Activated CD8-positive, alpha-beta T cell treated with anti-CD3 and anti-CD28 coated beads, Interleukin-2, amount 10 ng/mL, durations not matched to agents 7 days and 5 days (primary cell): ENCODE measurements at regions of chr11 and their contacts with region 1.

Region 1: DNA sequence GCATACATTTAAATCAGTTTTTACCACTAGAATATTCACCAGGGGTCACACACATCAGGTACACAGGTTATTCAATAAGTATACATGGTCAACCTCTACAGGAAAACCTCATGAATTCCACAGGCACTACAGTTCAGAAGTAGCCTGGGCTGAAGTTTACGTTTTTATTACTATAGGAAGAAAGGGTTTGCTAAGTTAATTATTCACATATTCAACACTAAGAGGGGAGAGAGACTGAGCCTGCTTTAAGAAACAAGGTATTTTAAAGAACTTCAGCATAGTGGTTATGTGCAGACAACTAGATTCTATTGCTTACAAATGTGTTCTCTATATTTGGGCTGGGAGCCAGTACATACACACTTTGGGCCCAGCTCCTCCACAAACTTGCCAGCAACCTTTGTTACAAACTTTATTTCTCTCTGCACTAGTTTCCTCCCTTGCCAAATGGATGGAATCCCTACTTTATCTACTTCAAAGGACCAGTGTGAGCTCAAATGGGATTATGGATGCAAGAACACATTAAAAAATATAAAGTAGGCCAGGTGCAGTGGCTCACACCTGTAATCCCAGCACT is 31.9 kb downstream of the IL18BP start:
- DNase-seq: no peak
- ATAC-seq: no peak
- H3K4me3 Mint-ChIP-seq: no peak overlapping the region
- H3K27ac Mint-ChIP-seq: no peak overlapping the region
- H3K4me1 Mint-ChIP-seq: peaks cover 19% of the 10 kb centered on the region
- H3K27me3 Mint-ChIP-seq: no peaks in the 10 kb centered on the region

Region 2: DNA sequence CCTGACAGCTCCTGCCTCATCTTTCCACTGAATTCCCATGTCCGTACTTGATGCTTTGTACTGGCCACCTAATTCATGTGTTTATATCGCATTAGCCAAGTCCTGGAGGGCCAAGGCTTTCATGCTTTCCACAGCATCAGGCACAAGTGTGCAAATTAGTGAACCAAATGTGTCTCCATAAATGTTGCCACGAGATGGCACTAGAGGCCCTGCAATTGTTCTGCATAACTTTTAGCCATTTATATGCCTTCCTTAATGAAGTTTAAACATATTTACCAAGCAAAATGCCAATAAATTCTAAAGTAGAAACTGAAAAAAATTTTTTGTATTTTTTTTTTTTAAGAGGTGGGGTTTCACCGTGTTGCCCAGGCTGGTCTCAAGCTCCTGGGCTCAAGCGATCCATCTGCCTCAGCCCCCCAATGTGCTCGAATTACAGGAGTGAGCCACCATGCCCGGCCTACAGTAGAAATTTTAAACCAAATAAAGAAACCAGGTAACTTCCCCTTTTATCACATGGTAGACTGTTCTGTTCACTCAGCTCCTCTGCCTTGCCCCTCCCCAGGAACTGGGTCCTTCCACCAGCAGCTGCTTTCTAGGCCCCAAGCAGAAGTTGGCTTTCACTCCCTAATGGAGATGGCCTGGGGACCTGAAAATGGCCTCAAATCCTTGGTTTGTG is 52.7 kb before region 1 on chr11:
- CTCF ChIA-PET with region 1: interaction called, 19 read pairs
- POLR2A ChIA-PET with region 1: no interaction called
- DNase-seq: peak; percentile 74
- ATAC-seq: peak; percentile 70
- H3K4me3 Mint-ChIP-seq: no peak overlapping the region
- H3K27ac Mint-ChIP-seq: no peak overlapping the region
- H3K4me1 Mint-ChIP-seq: no peaks in the 10 kb centered on the region
- H3K27me3 Mint-ChIP-seq: no peaks in the 10 kb centered on the region

Region 3: DNA sequence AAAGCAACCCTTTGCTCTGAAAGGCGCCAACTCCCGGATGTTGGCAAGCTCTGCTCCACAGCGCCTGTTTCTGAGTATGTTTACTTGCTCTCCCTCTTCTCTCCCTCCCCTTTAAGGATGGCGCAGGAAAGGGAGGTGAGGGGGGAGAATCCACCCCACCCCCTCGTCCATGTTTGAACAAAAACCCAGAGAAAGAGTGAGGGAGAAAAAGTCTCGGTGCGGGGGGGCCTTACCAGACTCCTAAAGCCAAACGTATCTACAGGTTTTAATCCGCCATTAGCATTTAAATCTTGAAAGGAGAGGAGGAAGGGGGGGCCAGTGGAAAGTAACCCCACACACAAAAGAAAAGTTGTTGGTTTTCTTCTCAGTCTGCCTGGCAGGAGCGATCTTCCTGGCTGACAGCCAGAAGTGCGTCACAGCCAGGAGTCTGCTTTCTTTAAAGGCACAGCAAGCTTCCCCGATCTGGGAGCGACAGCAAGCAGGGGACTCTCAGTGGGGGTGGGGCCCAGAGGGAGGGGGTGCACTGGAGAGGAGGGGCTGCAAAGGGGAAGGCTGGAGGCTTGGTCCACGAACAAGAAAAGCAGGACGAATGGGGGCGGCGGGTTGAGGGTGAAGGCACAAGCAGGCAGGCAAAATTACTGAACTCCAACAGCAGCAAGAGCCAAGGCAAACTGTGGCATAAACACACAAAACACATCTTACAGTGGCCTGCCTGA is 10.3 kb after region 1 on chr11:
- CTCF ChIA-PET with region 1: interaction called, 58 read pairs
- POLR2A ChIA-PET with region 1: interaction called, 10 read pairs
- DNase-seq: peak; percentile 73
- ATAC-seq: peak; percentile 30
- H3K4me3 Mint-ChIP-seq: no peak overlapping the region
- H3K27ac Mint-ChIP-seq: no peak overlapping the region
- H3K4me1 Mint-ChIP-seq: peaks cover 7% of the 10 kb centered on the region
- H3K27me3 Mint-ChIP-seq: no peaks in the 10 kb centered on the region

Region 4: DNA sequence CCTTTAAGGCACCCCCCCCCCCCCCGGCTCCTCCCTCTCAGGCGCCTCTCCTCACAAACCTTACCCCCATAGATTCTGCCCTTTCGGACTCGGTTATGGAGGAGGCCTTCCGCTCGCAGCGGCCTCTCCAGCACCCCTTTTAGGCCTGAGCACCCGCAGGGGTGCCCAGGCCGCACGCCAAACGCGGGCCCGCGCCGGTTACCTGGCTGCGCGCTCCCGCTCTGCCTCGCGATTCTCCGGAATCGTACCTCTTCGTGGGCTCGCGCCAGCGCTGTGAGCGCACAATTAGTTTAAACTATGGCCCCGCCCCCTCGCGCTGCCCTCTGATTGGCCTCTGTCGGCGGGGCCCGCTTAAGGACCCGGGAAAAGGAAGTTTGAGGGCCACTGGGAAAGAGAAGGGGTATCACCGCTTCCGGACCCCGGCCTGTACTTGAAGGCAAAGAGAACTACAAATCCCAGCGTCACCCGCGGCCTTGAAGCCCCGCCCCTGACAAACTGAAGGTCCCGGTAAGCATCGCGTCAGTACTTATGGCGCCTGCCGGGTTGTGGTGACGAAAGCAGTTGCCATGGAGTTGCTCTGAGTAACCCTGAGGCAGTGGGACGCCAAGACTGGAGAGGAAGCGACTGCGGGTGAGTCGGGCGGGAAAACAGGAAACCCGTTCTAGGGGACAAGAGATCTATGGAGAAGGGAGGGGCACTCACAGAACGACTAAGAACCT is 49.9 kb after region 1 on chr11 and contains the starts of genes LRRC51 and NUMA1:
- CTCF ChIA-PET with region 1: interaction called, 45 read pairs
- POLR2A ChIA-PET with region 1: no interaction called
- DNase-seq: peak; percentile 100
- ATAC-seq: peak; percentile 96
- H3K4me3 Mint-ChIP-seq: peak within 1 kb of the TSS; percentile 97
- H3K27ac Mint-ChIP-seq: peak within 1 kb of the TSS; percentile 94
- H3K4me1 Mint-ChIP-seq: peaks cover 48% of the 10 kb centered on the region
- H3K27me3 Mint-ChIP-seq: no peaks in the 10 kb centered on the region
- total RNA-seq, gene LRRC51: 6.9 to 7.0 TPM
- total RNA-seq, gene NUMA1: 198 to 199 TPM

Region 5: DNA sequence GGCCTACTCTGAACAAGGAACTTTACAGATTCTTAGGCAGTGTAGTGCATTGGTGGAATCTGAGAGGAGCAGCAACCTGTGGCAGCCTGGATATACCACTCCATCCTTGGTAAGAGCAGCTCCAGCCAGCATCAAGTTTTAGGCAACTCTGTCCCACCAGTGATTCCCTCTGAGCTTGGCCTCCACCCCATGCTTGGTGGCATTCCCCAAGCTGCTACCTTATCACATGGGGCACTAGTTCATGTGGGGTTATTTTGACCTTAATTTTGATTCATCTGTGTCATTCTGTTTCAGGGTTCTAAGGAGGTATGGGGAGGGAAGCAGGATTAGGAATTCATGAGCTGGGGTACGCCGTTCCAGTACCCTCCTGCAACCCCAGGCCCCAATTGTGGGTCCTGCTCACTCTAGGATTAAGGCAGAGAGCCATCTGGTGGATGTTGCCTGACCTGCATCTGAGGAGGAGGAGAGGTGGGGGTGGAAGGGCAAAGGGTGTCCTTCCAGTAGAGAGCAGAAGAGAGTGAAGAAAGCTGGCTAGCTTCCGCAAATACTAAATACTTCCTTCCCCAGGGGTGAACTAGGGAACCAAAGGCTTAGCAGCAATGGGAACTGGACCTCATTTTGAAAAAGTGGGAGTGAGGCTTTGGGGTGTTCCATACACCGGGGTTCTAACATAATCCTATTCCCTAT is 60.6 kb after region 1 on chr11:
- CTCF ChIA-PET with region 1: interaction called, 163 read pairs
- POLR2A ChIA-PET with region 1: no interaction called
- DNase-seq: peak; percentile 76
- ATAC-seq: peak; percentile 87
- H3K4me3 Mint-ChIP-seq: no peak overlapping the region
- H3K27ac Mint-ChIP-seq: peak overlapping the region; percentile 43
- H3K4me1 Mint-ChIP-seq: peaks cover 4% of the 10 kb centered on the region
- H3K27me3 Mint-ChIP-seq: no peaks in the 10 kb centered on the region

Region 6: GRCh38 chr11:72112321-72113219 is 82.0 kb after region 1 on chr11 and contains the start of gene ANAPC15:
- CTCF ChIA-PET with region 1: interaction called, 11 read pairs
- POLR2A ChIA-PET with region 1: interaction called, 3 read pairs
- DNase-seq: peak; percentile 100
- ATAC-seq: peak; percentile 93
- H3K4me3 Mint-ChIP-seq: peak within 1 kb of the TSS; percentile 95
- H3K27ac Mint-ChIP-seq: peak within 1 kb of the TSS; percentile 100
- H3K4me1 Mint-ChIP-seq: peaks cover 20% of the 10 kb centered on the region
- H3K27me3 Mint-ChIP-seq: no peaks in the 10 kb centered on the region
- total RNA-seq, gene ANAPC15: 62.9 to 69.5 TPM

Region 7: DNA sequence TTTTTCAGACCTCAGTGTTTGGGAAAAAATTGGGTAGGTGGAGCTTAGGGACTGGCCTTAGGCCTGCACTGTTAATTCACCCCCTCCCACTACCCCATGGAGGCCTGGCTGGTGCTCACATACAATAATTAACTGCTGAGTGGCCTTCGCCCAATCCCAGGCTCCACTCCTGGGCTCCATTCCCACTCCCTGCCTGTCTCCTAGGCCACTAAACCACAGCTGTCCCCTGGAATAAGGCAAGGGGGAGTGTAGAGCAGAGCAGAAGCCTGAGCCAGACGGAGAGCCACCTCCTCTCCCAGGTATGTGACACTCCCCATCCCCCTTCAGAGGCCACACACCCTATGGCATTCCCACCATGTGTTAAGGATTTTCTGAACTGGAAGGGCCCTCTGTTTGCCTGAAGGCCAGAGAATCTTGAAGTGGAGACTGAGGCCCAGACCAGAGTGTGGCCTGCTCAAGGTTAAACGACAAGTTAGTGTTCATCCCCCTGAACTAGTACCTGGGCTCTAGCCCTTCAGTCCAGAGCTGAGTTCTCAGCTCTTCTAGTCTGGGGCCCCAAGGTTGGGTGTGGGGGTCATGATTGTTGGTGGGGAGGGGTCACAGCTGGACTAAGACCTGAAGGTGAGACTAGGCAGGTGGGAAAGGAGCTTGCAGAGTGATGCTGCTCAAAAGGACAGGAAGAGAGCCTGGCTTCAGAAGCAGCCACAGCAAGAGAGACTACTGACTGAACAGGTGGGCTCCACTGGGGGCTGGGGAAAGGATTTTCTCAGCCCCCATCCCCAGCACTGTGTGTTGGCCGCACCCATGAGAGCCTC is 159.1 kb after region 1 on chr11:
- CTCF ChIA-PET with region 1: interaction called, 31 read pairs
- POLR2A ChIA-PET with region 1: no interaction called
- DNase-seq: no peak
- ATAC-seq: no peak
- H3K4me3 Mint-ChIP-seq: no peak overlapping the region
- H3K27ac Mint-ChIP-seq: no peak overlapping the region
- H3K4me1 Mint-ChIP-seq: no peaks in the 10 kb centered on the region
- H3K27me3 Mint-ChIP-seq: no peaks in the 10 kb centered on the region

Region 8: GRCh38 chr11:72617080-72617762 is 586.7 kb after region 1 on chr11:
- CTCF ChIA-PET with region 1: no interaction called
- POLR2A ChIA-PET with region 1: no interaction called
- DNase-seq: no peak
- ATAC-seq: no peak
- H3K4me3 Mint-ChIP-seq: no peak overlapping the region
- H3K27ac Mint-ChIP-seq: no peak overlapping the region
- H3K4me1 Mint-ChIP-seq: peaks cover 48% of the 10 kb centered on the region
- H3K27me3 Mint-ChIP-seq: peaks cover 25% of the 10 kb centered on the region